Activated T-helper 2 cell treated with anti-CD3 and anti-CD28 coated beads, Interferon-gamma antibody, Interleukin-2, Interleukin-4, amounts not matched to agents 10 μg/mL and 5 μg/mL and 100 μg/mL, durations not matched to agents 14 hours and 24 hours and 36 hours (primary cell): ENCODE measurements at regions of chr2 and their contacts with region 1.

Region 1: GRCh38 chr2:216222650-216223352 is 113.7 kb downstream of the XRCC5 start:
- DNase-seq: no peak
- H3K4me3 Mint-ChIP-seq: no peak overlapping the region
- H3K27ac Mint-ChIP-seq: peak overlapping the region; percentile 73
- H3K4me1 Mint-ChIP-seq: peaks cover 52% of the 10 kb centered on the region
- H3K27me3 Mint-ChIP-seq: no peaks in the 10 kb centered on the region

Region 2: GRCh38 chr2:216034065-216034464 is 188.7 kb before region 1 on chr2:
- intact Hi-C with region 1: no loop called
- DNase-seq: peak; percentile 69
- H3K4me3 Mint-ChIP-seq: no peak overlapping the region
- H3K27ac Mint-ChIP-seq: no peak overlapping the region
- H3K4me1 Mint-ChIP-seq: peaks cover 36% of the 10 kb centered on the region
- H3K27me3 Mint-ChIP-seq: no peaks in the 10 kb centered on the region

Region 3: GRCh38 chr2:216206041-216206703 is 16.6 kb before region 1 on chr2:
- intact Hi-C with region 1: loop called (anchors 2 kb)
- DNase-seq: no peak
- H3K4me3 Mint-ChIP-seq: no peak overlapping the region
- H3K27ac Mint-ChIP-seq: peak overlapping the region; percentile 91
- H3K4me1 Mint-ChIP-seq: peaks cover 42% of the 10 kb centered on the region
- H3K27me3 Mint-ChIP-seq: no peaks in the 10 kb centered on the region

Region 4: GRCh38 chr2:216308576-216308975 is 85.8 kb after region 1 on chr2:
- intact Hi-C with region 1: no loop called
- DNase-seq: no peak
- H3K4me3 Mint-ChIP-seq: no peak overlapping the region
- H3K27ac Mint-ChIP-seq: no peak overlapping the region
- H3K4me1 Mint-ChIP-seq: no peaks in the 10 kb centered on the region
- H3K27me3 Mint-ChIP-seq: peaks cover 11% of the 10 kb centered on the region

Region 5: GRCh38 chr2:216350214-216350789 is 127.5 kb after region 1 on chr2:
- intact Hi-C with region 1: loop called (anchors 5 kb)
- DNase-seq: peak; percentile 24
- H3K4me3 Mint-ChIP-seq: no peak overlapping the region
- H3K27ac Mint-ChIP-seq: peak overlapping the region; percentile 67
- H3K4me1 Mint-ChIP-seq: peaks cover 68% of the 10 kb centered on the region
- H3K27me3 Mint-ChIP-seq: no peaks in the 10 kb centered on the region

Region 6: DNA sequence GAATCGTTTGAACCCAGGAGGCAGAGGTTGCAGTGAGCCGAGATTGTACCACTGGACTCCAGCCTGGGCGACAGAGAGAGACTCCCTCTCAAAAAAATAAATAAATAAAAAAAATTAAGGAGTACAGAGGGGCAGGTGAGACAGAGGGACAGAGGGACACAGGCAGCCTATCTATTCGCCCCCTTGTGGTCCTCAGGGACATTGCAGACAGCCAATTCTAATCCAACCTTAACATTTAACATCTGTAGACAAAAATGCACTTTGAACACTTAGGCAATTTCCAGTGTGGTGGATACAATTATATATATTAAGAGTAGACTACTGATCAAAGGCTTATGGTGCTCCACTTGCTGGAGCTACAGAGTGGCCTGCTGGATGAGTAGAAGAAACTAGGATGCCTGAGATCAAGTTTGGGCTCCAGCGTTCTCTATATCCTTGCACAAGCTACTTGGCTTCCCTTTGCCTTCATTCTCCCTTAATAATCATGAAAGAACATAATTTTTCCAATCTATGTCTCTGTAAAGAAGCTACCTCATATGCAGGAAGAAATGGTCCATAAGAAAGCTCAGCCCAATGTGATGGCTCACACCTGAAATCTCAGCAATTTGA is 181.3 kb after region 1 on chr2:
- intact Hi-C with region 1: loop called (anchors 2 kb)
- DNase-seq: peak; percentile 12
- H3K4me3 Mint-ChIP-seq: no peak overlapping the region
- H3K27ac Mint-ChIP-seq: no peak overlapping the region
- H3K4me1 Mint-ChIP-seq: no peaks in the 10 kb centered on the region
- H3K27me3 Mint-ChIP-seq: peaks cover 35% of the 10 kb centered on the region